ENCODE measurements at regions of chr19 and their contacts with region 1.

Region 1: GRCh38 chr19:17511724-17512573 is 500 bp downstream of the PGLS start:
- DNase-seq: peak; percentile 44

Region 2: DNA sequence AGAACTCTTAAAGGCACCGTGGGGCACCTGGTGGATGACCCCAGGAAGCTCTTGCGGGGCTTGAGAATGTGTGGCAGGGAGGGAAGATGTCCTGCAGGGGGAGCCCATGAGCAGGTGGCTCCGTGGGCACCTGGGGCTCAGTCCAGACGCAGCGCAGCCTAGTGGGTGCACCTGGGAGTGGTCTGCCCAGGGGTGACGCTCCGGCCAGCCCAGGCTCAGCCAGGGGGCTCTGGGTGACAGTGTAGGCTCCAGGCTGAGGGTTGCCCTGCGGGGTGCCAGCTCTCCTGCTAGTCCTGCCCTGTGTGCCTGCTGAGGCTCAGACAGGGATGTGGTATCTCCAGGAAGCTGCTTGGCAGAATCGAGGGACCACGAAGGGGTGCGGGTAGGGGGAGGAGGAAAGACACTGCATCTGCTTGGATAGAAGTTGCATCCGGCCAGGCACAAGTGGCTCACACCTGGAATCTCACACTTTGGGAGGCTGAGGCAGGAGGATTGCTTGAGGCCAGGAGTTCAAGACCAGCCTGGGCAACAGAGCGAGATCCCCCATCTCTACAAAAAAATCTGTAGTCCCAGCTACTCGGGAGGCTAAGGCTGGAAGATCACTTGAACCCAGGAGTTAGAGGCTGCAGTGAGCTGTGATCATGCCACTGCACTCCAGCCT is 15.5 kb before region 1 on chr19:
- CTCF ChIA-PET with region 1: interaction called, 13 read pairs
- POLR2A ChIA-PET with region 1: interaction called, 4 read pairs
- DNase-seq: peak; percentile 88

Region 3: GRCh38 chr19:17522988-17523872 is 11.3 kb after region 1 on chr19:
- CTCF ChIA-PET with region 1: no interaction called
- POLR2A ChIA-PET with region 1: interaction called, 16 read pairs
- DNase-seq: no peak

Measured in HEK293T (cell line).